Activated CD8-positive, alpha-beta T cell treated with anti-CD3 and anti-CD28 coated beads, Interleukin-2, amount 10 ng/mL, durations not matched to agents 7 days and 5 days (primary cell): ENCODE measurements at regions of chr6 and their contacts with region 1.

Region 1: DNA sequence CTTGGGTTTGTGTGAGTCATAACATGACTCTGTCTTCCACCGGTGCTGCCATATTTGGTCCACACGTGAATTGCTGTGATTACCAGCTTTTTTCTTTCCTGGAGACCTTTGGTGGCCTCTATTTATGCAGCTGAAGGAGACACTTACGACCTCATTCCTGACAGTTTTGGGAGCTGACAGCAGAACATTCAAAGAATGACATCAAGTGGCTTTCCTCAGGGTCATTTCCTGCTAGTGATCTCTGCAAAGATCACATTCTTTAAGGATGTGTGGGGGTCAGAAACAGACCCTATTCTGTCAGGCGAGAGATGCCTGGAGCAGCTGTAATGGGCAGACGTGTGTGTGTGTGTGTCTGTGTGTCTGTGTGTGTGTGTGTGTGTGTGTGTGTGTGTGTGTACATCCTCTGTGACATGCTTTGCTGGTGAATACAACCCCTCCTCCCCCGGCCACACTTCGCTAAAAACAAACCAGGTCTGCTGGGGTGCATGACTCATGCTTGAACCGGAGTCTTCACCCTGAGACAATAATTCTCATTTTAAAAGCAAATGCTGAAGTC is 115.6 kb downstream of the TMEM170B start:
- DNase-seq: peak; percentile 67
- ATAC-seq: peak; percentile 74
- H3K4me3 Mint-ChIP-seq: no peak overlapping the region
- H3K27ac Mint-ChIP-seq: no peak overlapping the region
- H3K4me1 Mint-ChIP-seq: peaks cover 20% of the 10 kb centered on the region
- H3K27me3 Mint-ChIP-seq: peaks cover 10% of the 10 kb centered on the region

Region 2: GRCh38 chr6:11381801-11382513 is 271.1 kb before region 1 on chr6:
- CTCF ChIA-PET with region 1: no interaction called
- POLR2A ChIA-PET with region 1: no interaction called
- DNase-seq: peak; percentile 87
- ATAC-seq: peak; percentile 95
- H3K4me3 Mint-ChIP-seq: peak overlapping the region; percentile 91
- H3K27ac Mint-ChIP-seq: peak overlapping the region; percentile 96
- H3K4me1 Mint-ChIP-seq: peaks cover 53% of the 10 kb centered on the region
- H3K27me3 Mint-ChIP-seq: peaks cover 2% of the 10 kb centered on the region

Region 3: DNA sequence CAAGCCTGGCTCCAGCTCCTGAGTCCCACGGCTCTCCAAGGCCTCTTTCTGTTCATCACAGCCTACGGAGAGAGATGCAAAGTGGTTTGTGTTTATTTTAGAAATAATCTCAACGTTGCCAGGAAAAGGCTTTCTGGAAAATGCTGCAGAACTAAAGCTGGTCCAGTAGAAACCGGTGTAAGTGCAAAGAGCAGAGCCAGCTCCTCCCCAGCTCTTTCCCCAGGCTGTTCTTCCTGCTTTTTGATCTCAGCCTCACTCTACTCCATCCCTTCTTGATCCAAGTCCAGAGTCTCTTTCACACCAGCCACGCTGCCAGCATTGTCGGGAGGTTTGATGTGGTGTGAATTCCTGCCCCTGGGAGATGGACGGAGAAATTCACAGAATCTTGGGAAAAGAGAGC is 45.7 kb before region 1 on chr6:
- CTCF ChIA-PET with region 1: no interaction called
- POLR2A ChIA-PET with region 1: no interaction called
- DNase-seq: no peak
- ATAC-seq: no peak
- H3K4me3 Mint-ChIP-seq: no peak overlapping the region
- H3K27ac Mint-ChIP-seq: no peak overlapping the region
- H3K4me1 Mint-ChIP-seq: no peaks in the 10 kb centered on the region
- H3K27me3 Mint-ChIP-seq: peaks cover 5% of the 10 kb centered on the region

Region 4: GRCh38 chr6:11667876-11668275 is 14.8 kb after region 1 on chr6:
- CTCF ChIA-PET with region 1: interaction called, 17 read pairs
- POLR2A ChIA-PET with region 1: no interaction called
- DNase-seq: no peak
- ATAC-seq: no peak
- H3K4me3 Mint-ChIP-seq: no peak overlapping the region
- H3K27ac Mint-ChIP-seq: no peak overlapping the region
- H3K4me1 Mint-ChIP-seq: no peaks in the 10 kb centered on the region
- H3K27me3 Mint-ChIP-seq: peaks cover 12% of the 10 kb centered on the region

Region 5: GRCh38 chr6:12075067-12075563 is 422.0 kb after region 1 on chr6:
- CTCF ChIA-PET with region 1: interaction called, 11 read pairs
- POLR2A ChIA-PET with region 1: no interaction called
- DNase-seq: no peak
- ATAC-seq: no peak
- H3K4me3 Mint-ChIP-seq: no peak overlapping the region
- H3K27ac Mint-ChIP-seq: peak overlapping the region; percentile 23
- H3K4me1 Mint-ChIP-seq: peaks cover 36% of the 10 kb centered on the region
- H3K27me3 Mint-ChIP-seq: no peaks in the 10 kb centered on the region

Region 6: DNA sequence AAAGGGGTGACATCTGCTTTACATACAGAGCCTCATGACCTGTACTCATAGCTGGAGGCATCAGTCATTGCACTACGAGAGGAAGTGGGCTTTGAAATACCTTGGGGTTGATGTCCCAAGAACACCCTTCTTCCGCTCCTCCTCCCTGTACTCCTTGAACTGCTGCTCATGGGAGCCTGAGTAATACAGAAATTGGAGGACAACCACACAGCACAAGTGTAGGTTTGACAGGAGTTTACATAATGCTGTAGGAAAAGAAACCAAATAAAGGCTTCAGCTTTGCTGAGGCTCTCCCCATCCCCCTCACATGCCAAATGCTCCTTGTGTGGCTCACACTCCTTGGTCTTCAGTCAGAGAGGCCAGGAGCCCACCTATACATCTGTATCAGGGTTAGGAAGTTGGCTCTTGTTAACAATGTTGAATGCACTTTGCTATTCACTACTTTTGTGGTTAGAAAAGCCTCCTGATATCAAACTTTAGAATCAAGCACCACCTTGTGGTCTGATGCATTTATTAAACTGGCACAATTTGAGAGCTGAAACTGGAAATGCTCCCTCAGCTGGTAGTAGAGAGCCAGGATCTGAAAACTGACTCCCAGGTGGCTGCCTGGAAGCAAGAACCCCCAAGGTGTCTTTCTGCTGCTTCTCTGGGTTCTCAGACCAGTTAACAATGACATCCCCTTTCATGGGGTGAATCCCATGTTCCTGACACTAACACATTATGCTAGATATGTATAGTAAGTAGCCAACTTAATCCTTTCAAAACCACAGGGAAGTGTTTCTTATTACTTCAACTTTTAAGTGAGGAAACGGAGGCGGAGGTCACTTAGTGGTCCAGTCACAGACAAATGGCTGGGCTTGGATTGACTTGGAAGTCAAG is 580.8 kb after region 1 on chr6:
- CTCF ChIA-PET with region 1: interaction called, 31 read pairs
- POLR2A ChIA-PET with region 1: no interaction called
- DNase-seq: peak; percentile 54
- ATAC-seq: peak; percentile 79
- H3K4me3 Mint-ChIP-seq: peak overlapping the region; percentile 10
- H3K27ac Mint-ChIP-seq: peak overlapping the region; percentile 79
- H3K4me1 Mint-ChIP-seq: peaks cover 34% of the 10 kb centered on the region
- H3K27me3 Mint-ChIP-seq: no peaks in the 10 kb centered on the region

Region 7: GRCh38 chr6:12289933-12290820 is 637.1 kb after region 1 on chr6 and contains the start of gene EDN1:
- CTCF ChIA-PET with region 1: interaction called, 42 read pairs
- POLR2A ChIA-PET with region 1: interaction called, 4 read pairs
- DNase-seq: peak; percentile 65
- ATAC-seq: peak; percentile 93
- H3K4me3 Mint-ChIP-seq: peak within 1 kb of the TSS; percentile 72
- H3K27ac Mint-ChIP-seq: no peak within 1 kb of the TSS
- H3K4me1 Mint-ChIP-seq: peaks cover 15% of the 10 kb centered on the region
- H3K27me3 Mint-ChIP-seq: peaks cover 37% of the 10 kb centered on the region
- total RNA-seq, gene EDN1: not detected

Region 8: GRCh38 chr6:12605888-12606345 is 952.8 kb after region 1 on chr6:
- CTCF ChIA-PET with region 1: interaction called, 16 read pairs
- POLR2A ChIA-PET with region 1: no interaction called
- DNase-seq: peak; percentile 67
- ATAC-seq: peak; percentile 74
- H3K4me3 Mint-ChIP-seq: no peak overlapping the region
- H3K27ac Mint-ChIP-seq: no peak overlapping the region
- H3K4me1 Mint-ChIP-seq: no peaks in the 10 kb centered on the region
- H3K27me3 Mint-ChIP-seq: peaks cover 3% of the 10 kb centered on the region